ENCODE measurements at regions of chr1 and their contacts with region 1.

Region 1: GRCh38 chr1:205711104-205712020 is 31.1 kb upstream of the SLC45A3 start:
- DNase-seq: peak; percentile 73
- H3K4me3 Mint-ChIP-seq: no peak overlapping the region
- H3K27ac Mint-ChIP-seq: peak overlapping the region; percentile 74
- H3K4me1 Mint-ChIP-seq: peaks cover 11% of the 10 kb centered on the region
- H3K27me3 Mint-ChIP-seq: no peaks in the 10 kb centered on the region

Region 2: DNA sequence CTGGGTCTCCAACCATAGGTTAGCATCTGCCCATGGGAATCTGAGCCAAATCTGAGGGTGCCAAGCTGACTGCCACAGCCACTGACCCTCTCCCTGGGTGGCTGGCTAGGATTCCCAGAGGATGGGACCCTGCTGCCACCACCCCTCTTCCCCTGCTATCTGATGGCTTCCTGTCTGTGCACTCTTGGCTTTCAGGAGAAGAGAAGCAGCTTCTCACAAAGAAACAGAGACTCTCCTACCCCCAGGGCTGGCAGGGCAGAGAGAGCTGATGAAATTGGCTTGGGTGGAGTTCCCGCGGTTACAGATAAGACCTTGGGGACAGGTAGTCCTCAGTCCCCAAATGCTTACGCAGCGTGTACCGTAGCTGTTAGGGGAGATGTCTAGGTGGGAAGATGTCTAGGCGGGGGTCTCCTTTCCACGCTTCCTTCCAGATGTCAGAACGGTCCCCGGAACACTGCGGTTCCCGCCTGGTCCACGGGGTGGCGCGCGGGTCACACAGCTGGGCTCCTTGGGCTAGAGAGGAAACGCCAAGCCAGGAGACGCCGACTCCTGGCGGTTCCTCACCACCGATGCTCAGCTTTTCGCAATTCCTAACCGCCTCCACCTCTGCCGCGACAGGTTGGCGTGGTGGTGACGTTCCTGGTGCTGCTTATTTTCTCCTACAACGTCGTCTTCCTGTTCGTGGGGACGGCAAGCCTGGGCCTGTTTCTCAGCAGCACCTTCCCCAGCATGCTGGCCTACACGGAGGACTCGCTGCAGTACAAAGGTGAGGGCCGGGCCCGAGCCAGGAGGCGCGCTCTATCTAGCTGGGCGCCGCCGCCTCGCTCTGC is 119.6 kb before region 1 on chr1:
- CTCF ChIA-PET with region 1: interaction called, 23 read pairs
- DNase-seq: peak; percentile 93
- H3K4me3 Mint-ChIP-seq: peak overlapping the region; percentile 84
- H3K27ac Mint-ChIP-seq: peak overlapping the region; percentile 89
- H3K4me1 Mint-ChIP-seq: peaks cover 56% of the 10 kb centered on the region
- H3K27me3 Mint-ChIP-seq: peaks cover 9% of the 10 kb centered on the region

Region 3: GRCh38 chr1:205680073-205680851 is 31.1 kb before region 1 on chr1 and contains the start of gene SLC45A3:
- CTCF ChIA-PET with region 1: interaction called, 12 read pairs
- DNase-seq: peak; percentile 53
- H3K4me3 Mint-ChIP-seq: peak within 1 kb of the TSS; percentile 70
- H3K27ac Mint-ChIP-seq: no peak within 1 kb of the TSS
- H3K4me1 Mint-ChIP-seq: peaks cover 11% of the 10 kb centered on the region
- H3K27me3 Mint-ChIP-seq: peaks cover 60% of the 10 kb centered on the region

Region 4: DNA sequence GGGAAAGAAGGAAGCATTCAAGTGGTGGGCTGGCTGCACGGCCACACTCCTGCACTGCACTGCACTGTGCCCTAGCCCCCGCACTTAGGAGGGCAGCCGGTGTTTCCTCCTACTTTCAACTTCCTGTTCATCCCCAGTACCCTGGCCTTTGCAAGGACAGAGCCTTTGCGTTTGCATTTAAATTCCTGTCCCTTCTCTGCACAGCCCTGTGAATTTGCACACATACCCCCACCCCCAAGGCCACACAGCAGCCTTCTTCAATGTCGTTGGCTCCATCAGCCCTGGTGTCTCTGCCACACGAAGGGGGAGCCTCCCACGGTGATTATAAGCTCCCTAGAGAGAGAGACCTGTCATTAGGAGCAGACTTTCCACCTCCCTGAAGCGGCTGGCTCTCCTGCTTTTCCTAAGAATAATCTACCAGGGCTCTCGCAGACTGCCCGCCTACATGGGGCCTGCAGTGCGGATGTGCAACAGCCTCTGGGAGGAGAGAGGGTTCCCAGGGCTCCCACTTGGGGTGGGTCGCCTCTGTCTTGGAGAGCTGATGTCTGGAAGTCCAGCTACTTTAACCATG is 17.9 kb before region 1 on chr1:
- CTCF ChIA-PET with region 1: interaction called, 13 read pairs
- DNase-seq: no peak
- H3K4me3 Mint-ChIP-seq: no peak overlapping the region
- H3K27ac Mint-ChIP-seq: no peak overlapping the region
- H3K4me1 Mint-ChIP-seq: peaks cover 2% of the 10 kb centered on the region
- H3K27me3 Mint-ChIP-seq: peaks cover 74% of the 10 kb centered on the region

Region 5: DNA sequence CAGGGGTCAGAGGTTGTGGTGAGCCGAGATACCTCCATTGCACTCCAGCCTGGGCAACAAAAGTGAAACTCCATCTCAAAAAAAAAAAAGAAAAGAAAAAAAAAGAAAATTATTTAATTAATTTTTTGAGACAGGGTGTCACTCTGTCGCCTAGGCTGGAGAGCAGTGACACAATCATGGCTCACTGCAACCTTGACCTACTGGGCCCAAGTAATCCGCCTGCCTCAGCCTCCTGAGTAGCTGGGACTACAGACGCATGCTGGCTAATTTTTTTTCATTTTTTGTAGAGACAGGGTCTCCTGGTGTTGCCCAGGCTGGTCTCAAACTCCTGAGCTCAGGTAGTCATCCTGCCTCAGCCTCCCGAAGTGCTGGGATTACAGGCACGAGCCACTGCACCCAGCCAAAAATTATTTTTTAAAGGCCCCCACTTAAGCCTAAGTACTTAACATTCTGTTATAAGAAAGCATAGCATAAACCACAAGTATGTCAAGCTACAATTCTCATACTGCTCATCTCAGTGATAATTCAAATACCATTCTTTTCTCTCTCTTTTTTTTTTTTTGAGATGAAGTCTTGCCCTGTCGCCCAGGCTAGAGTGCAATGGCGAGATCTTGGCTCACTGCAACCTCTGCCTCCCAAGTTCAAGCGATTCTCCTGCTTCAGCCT is 18.7 kb after region 1 on chr1:
- CTCF ChIA-PET with region 1: interaction called, 14 read pairs
- DNase-seq: no peak
- H3K4me3 Mint-ChIP-seq: no peak overlapping the region
- H3K27ac Mint-ChIP-seq: no peak overlapping the region
- H3K4me1 Mint-ChIP-seq: peaks cover 25% of the 10 kb centered on the region
- H3K27me3 Mint-ChIP-seq: no peaks in the 10 kb centered on the region

Region 6: DNA sequence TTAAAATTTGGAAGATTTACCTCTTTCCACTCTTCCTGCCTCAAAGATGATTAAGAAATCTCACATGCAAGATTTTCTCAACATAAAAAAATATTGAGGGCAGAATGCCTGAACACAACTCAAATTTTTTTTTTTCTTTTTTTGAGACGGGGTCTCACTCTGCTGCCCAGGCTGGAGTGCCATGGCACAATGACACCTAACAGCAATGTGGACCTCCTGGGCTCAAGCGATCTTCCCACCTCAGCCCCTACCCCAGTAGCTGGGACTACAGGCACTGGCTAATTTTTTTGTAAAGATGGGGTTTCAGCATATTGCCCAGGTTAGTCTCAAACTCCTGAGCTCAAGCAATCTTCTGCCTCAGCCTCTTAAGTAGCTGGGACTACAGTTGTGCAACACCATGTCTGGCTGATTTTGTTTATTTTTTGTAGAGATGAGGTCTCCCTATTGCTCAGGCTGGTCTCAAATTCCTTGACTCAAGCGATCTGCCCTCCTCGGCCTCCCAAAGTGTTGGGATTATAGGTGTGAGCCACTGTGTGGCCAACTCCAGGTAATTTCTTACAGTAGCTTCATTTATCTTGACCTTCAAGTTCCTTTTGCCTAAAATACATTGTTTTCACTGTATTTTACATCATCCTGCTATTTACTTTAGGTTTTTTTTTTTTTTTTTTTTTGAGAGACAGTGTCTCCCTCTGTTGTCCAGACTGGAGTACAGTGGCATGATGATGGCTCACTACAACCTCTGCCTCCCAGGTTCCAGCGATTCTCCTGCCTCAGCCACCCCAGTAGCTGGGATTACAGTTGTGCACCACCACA is 28.2 kb after region 1 on chr1:
- CTCF ChIA-PET with region 1: interaction called, 12 read pairs
- DNase-seq: no peak
- H3K4me3 Mint-ChIP-seq: no peak overlapping the region
- H3K27ac Mint-ChIP-seq: no peak overlapping the region
- H3K4me1 Mint-ChIP-seq: peaks cover 24% of the 10 kb centered on the region
- H3K27me3 Mint-ChIP-seq: no peaks in the 10 kb centered on the region

Region 7: DNA sequence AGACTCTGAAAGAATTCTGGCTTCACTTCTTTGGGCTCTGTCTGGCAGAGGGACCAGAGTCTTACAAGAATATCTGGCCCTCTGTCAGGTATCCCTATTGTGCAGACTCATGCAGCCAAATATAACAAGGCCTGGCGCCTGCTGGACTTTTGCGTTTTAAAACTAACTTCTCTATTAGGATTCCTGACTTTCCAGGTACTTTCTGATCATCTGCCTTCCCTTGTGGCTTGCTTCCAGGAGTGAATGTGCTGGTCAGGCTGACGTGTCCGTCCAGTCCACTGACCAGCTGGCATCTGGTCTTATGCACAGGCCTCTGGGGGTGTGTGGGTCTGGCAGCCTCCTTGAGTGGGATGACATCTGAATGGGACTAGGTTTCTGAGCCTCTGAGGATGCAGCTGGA is 72.5 kb after region 1 on chr1:
- CTCF ChIA-PET with region 1: interaction called, 38 read pairs
- DNase-seq: no peak
- H3K4me3 Mint-ChIP-seq: no peak overlapping the region
- H3K27ac Mint-ChIP-seq: no peak overlapping the region
- H3K4me1 Mint-ChIP-seq: peaks cover 16% of the 10 kb centered on the region
- H3K27me3 Mint-ChIP-seq: peaks cover 4% of the 10 kb centered on the region

Region 8: DNA sequence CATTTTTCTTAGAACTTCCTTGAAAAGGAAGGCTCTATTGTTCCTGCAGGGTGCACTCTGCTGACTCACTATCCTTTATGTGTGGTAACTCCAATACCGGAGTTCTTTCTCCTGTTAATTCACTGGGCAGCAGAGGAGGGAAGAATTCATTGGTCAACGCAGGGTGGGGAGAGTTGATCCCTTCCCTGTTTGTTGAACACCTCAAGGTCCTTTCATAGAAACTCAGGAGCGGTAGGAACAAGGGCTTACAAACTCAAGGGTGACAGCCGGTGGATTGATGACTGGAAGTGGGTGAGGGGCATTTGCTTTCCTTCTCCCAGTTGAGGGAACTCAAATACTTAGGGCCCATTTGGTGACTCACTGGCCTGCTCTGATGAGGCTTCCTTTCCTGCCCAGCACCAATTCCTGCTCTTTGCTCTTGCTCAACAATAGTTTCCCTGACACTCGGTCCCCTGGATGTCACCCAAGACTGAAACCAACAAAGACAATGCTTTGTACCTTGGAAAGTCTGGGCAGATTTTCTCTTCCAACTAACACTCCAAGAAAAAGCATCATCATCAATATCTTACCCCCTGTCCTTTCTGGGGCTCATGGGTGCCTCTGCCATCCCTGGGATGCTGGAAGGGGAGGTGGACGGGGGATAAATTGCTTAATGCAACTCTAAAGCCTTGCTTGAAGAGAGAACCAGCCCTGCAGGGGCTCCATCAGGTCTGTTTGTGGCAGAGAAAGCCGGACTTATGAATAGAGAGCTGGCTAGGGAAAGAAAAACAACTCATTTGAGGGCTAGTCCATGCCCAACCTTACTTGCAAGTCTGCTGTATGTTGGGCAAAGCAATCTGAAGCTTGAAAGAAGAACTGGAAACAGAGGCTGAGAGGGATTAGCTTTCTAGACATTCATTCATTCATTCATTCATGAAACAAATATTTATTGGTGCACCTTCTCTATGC is 222.6 kb after region 1 on chr1:
- CTCF ChIA-PET with region 1: no interaction called
- DNase-seq: no peak
- H3K4me3 Mint-ChIP-seq: no peak overlapping the region
- H3K27ac Mint-ChIP-seq: no peak overlapping the region
- H3K4me1 Mint-ChIP-seq: no peaks in the 10 kb centered on the region
- H3K27me3 Mint-ChIP-seq: peaks cover 44% of the 10 kb centered on the region

Region 9: DNA sequence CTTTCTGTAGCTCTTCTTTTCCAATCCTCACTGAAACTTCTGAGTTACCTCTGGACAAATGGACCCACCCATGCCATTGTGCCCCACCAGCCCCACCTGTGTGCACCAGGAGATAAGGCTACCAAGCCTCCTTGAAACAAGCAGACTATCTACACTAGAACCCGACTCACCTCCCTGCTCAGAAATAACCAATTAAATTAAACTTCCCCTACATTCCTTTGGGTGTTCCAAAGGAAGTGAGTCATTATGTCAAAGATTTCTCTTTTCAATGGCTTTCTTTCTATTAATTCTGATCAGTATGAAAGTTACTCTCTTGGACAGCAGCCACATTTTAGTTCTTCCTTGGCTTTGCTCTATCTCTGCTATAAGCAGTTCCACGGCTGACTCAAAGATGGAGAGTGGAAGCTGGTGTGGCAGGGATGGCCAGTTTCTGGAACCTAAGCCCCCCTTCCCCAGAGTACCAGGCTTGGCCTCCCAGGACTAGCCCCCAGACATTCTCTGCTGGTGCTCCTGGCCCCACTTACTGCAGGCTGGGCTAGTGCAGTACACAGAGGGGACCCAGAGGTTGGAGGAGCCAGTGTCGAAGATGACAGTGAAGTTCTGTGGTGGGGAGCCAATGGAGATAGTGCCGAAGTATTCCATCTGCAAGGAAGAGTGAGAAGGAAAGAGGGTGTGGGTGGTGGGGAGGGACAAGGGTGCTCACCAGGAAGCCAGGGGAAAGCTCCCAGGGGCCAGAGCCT is 310.4 kb after region 1 on chr1:
- CTCF ChIA-PET with region 1: no interaction called
- DNase-seq: no peak
- H3K4me3 Mint-ChIP-seq: no peak overlapping the region
- H3K27ac Mint-ChIP-seq: no peak overlapping the region
- H3K4me1 Mint-ChIP-seq: no peaks in the 10 kb centered on the region
- H3K27me3 Mint-ChIP-seq: peaks cover 56% of the 10 kb centered on the region

Measured in activated naive CD4-positive, alpha-beta T cell treated with anti-CD3 and anti-CD28 coated beads, Interleukin-2, amount 10 ng/mL, durations not matched to agents 7 days and 5 days (primary cell).